Right ventricle myocardium superior (tissue), 1 donor: ENCODE measurements at regions of chr2 and their contacts with region 1.

Region 1: GRCh38 chr2:229133155-229133772 is 137.8 kb downstream of the PID1 start:
- DNase-seq: no peak
- ATAC-seq: peak; percentile 70

Region 2: GRCh38 chr2:229273723-229274338 is 140.6 kb after region 1 on chr2:
- intact Hi-C with region 1: loop called (anchors 5 kb)
- DNase-seq: no peak
- ATAC-seq: peak; percentile 84

Region 3: GRCh38 chr2:229586746-229587705 is 453.8 kb after region 1 on chr2:
- intact Hi-C with region 1: loop called (anchors 10 kb)
- DNase-seq: peak; percentile 86
- ATAC-seq: peak; percentile 99